Mammary epithelial cell (primary cell): ENCODE measurements at regions of chr6 and their contacts with region 1.

Region 1: DNA sequence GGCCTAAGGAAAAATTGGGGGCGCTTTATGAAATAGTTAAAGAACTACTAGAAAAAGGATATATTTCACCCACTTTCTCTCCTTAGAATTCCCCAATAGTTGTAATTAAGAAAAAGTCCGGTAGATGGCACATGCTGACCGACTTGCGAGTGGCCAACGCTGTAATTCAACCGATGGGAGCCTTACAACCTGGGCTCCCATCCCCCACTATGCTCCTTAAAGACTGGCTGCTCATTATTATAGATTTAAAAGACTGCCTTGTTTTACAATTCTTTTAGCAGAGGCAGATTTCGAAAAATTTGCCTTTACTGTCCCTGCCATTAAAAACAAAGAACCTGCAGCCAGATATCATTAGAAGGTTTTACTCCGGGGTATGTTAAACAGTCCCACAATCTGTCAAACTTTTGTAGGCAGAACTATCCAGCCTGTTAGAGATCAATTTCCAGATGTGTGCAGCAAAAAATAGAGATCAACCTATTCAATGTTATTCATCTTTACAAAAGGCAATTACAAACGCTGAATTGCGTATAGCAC is 58.5 kb upstream of the PRSS16 start:
- DNase-seq: peak; percentile 71
- H3K4me3 ChIP-seq: peak overlapping the region; percentile 56 to 74 (median 71)
- H3K27ac ChIP-seq: peak overlapping the region; percentile 44
- H3K4me1 ChIP-seq: no peaks in the 10 kb centered on the region
- H3K27me3 ChIP-seq: no peaks in the 10 kb centered on the region
- CTCF ChIP-seq: peak; percentile 38 to 68

Region 2: DNA sequence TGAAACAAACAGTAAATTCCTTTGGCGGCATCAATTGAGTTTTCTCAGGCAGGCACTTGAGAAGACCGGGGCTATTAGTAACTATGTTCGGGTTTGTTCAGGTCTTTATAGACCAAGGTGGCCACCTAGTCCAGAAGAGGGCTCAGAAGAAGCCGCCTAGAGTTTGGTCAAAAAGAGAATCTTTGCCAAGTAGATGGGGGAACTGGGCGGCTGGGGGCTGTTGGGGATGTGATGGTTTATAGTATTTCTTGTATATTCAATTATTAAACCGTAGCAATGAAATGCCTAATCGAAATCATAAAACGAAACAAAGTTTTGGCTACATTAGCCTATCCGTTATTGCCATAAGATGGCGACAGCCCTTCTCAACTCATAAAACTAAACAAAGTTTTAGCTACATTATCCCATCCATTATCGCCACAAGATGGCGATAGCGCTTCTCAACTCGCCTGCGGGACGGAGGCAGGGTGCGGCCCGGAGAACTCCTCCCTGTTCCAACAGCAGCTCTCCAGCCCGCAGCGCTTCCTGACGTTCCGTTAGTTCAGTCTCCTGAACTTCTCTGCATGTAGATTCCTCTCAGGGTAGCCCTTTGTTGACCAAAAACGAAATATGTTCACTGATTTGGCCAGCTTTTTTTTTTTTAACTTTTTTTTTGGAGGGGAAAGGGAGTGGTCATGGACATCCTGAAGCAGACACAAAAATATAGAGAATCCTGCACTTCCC is 62.0 kb before region 1 on chr6:
- CTCF ChIA-PET with region 1: no interaction called
- dilution Hi-C with region 1: no loop called
- in situ Hi-C with region 1: no loop called
- intact Hi-C with region 1: loop called (anchors 1 kb)
- DNase-seq: peak; percentile 87
- H3K4me3 ChIP-seq: peak overlapping the region; percentile 37 to 59 (median 39)
- H3K27ac ChIP-seq: no peak overlapping the region
- H3K4me1 ChIP-seq: peaks cover 12% of the 10 kb centered on the region
- H3K27me3 ChIP-seq: no peaks in the 10 kb centered on the region
- CTCF ChIP-seq: peak; percentile 83

Region 3: DNA sequence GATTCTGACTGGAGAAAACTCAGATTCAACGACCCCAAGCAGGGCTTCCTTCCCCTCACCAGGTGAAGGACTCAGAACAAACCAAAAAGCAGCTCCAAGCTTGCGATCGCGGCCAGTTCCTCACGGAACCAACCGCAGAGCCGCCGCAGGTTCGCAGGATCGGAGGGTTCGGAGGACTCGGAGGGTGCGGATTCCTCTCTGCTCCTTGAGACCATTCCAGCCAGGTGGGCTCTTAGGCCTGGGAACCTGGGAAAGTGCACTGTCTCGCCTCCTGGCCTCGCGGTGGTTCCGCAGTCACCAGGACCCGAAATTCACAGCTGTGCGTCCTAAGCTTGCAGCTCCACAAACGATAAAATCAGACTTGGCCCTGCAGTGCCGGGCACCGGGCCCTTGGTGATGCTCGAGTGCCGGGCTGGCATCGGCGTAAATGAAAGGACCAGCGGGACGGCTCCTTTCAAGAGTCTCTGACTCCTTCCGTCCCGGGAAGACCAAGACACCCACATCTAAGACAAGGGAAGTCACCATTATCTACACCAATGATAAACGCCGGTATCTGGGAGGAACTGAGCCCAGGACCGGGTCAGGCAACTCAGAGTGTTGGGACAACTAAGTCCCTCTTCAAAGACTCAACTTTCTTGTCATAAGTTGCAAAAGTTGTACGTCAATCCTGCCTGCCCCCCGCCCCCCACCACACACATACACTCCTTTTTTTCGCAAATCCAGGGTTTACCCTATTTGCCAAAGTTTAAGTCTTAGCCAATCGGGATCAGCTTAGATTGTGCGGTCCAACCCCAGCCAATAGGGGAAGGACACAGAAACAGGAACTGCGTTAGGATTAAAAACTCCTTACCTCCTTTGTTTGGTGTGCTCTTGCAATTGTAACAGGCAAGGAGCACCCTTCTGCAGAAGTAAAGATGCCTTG is 11.2 kb before region 1 on chr6:
- CTCF ChIA-PET with region 1: no interaction called
- dilution Hi-C with region 1: no loop called
- in situ Hi-C with region 1: no loop called
- intact Hi-C with region 1: loop called (anchors 1 kb)
- DNase-seq: peak; percentile 88
- H3K4me3 ChIP-seq: peak overlapping the region; percentile 80 to 100 (median 96)
- H3K27ac ChIP-seq: peak overlapping the region; percentile 62
- H3K4me1 ChIP-seq: peaks cover 3% of the 10 kb centered on the region
- H3K27me3 ChIP-seq: no peaks in the 10 kb centered on the region
- CTCF ChIP-seq: peak; percentile 53 to 69

Region 4: DNA sequence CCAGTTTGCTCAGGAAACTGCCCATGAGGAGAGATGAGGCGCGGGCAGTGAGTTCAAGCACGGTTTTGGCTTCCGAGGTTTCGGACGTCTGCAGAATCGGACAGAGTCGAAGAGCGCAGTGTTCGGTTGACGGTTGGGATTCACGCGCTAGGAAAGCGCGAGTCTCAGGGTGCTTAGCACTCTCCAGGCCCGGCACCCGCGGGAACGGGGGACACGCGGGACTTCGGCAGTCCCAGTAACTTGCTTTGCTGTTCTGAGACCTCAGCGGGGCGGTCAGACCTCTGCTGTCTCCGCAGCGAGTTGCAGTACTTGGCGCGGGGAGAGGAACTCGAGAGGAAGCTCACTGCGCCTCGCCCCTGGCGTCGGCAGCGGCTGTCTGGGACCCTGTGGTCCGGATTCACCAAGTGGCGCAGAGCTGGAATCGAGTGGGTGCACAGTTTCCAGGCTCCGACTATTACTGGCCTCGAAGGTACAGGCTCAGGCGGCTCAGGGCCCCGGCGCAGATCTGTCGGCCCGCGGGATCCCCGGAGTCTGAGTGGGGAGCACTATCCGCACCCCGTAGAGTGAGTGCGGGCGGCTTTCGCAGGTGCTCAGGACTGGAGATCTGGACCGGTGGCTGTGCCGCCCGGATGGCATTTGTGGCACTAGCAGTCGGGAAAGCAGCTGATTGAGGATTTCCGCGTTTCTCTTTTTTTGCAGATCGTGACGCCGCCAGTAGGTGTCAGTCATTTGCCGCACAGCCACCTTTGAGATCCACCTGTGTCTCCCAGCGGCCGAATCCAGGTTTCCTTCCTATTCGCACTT is 123.4 kb after region 1 on chr6 and contains the start of gene POM121L2:
- CTCF ChIA-PET with region 1: no interaction called
- dilution Hi-C with region 1: no loop called
- in situ Hi-C with region 1: no loop called
- intact Hi-C with region 1: loop called (anchors 5 kb)
- DNase-seq: peak; percentile 73
- H3K4me3 ChIP-seq: peak within 1 kb of the TSS; percentile 60 to 90 (median 65)
- H3K27ac ChIP-seq: no peak within 1 kb of the TSS
- H3K4me1 ChIP-seq: peaks cover 13% of the 10 kb centered on the region
- H3K27me3 ChIP-seq: no peaks in the 10 kb centered on the region
- CTCF ChIP-seq: peak; percentile 64 to 87
- total RNA-seq, gene POM121L2: not detected

Region 5: DNA sequence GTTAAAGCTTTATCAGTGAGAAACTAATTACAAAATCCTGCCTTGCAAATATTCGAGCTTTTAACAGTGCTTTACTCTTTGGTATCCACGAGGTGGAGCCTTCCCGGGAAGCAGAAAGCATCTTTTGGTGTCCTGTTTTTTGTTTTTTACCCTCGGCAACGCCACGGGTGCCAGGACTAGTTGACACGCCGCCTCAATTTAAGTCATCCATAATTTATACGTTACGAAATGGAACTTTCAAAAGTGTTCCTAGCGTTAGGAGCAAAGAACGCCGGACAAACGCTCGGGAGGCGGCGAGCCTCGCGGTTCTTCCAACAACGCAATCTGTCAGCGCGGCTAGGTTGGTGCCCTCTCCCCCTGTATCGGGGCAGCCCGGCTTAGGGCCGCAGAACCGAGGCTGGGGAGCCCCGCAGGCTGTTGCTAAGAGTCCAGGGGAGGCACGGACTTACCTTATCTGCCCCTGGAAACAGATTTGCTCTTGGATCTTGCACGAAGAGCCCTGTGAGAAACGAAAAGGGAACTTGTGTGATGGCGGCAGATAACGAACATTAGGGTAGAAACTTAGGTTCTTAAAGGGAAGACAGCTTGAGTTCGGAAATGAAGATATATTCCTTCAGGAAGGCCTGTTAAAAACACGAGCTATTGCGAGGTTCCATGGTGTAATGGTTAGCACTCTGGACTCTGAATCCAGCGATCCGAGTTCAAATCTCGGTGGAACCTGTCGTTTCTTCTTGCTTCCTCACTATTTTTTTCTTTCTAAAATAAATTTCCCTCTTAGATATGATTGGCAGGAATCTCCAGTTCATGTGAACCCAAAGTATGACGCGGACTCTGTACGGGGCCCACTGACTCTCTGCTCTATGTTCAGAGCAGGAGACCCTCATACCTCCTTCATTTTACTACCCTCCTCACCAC is 330.2 kb after region 1 on chr6:
- CTCF ChIA-PET with region 1: interaction called, 3 read pairs
- dilution Hi-C with region 1: no loop called
- in situ Hi-C with region 1: loop called in 1 of 2 experiments (anchors 25 kb)
- intact Hi-C with region 1: loop called (anchors 2 kb)
- DNase-seq: peak; percentile 86
- H3K4me3 ChIP-seq: peak overlapping the region; percentile 45 to 67 (median 55)
- H3K27ac ChIP-seq: peak overlapping the region; percentile 52
- H3K4me1 ChIP-seq: peaks cover 15% of the 10 kb centered on the region
- H3K27me3 ChIP-seq: peaks cover 3% of the 10 kb centered on the region
- CTCF ChIP-seq: peak; percentile 76 to 77

Region 6: GRCh38 chr6:28355743-28356665 is 1167.1 kb after region 1 on chr6:
- CTCF ChIA-PET with region 1: no interaction called
- dilution Hi-C with region 1: no loop called
- in situ Hi-C with region 1: no loop called
- intact Hi-C with region 1: loop called (anchors 10 kb)
- DNase-seq: peak; percentile 77
- H3K4me3 ChIP-seq: peak overlapping the region; percentile 50 to 60 (median 59)
- H3K27ac ChIP-seq: peak overlapping the region; percentile 49
- H3K4me1 ChIP-seq: peaks cover 16% of the 10 kb centered on the region
- H3K27me3 ChIP-seq: no peaks in the 10 kb centered on the region
- CTCF ChIP-seq: peak; percentile 73 to 78